WTC11 (cell line): ENCODE measurements at regions of chr12 and their contacts with region 1.

Region 1: DNA sequence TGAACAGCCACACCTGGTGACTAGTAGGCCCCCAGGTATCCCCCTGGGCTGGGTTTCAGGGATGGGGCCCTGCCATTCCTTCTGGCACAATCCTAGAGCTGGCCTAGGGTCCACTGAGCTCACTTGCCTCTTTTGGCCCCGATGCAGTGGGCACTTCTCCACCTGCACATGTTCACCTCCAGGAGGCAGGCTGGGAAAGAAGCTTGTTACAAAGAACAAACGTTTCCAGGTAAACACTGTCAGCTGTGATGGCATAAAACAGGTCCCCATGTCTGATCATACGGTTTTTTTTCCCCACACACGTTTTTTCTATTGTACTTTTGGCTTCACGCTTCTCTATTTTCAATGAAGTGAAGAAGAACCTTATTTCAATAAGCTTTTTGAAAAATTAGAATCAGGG is 15.8 kb upstream of the HVCN1 start:
- DNase-seq: peak; percentile 42
- ATAC-seq: peak; percentile 88
- H3K4me3 Mint-ChIP-seq: no peak overlapping the region
- H3K27ac Mint-ChIP-seq: no peak overlapping the region
- H3K4me1 Mint-ChIP-seq: 0 out of 2 replicates have a peak, but pooled peaks cover 2% of the 10 kb centered on the region
- H3K27me3 Mint-ChIP-seq: no peaks in the 10 kb centered on the region; the same call in 1 of the 2 replicates
- CTCF ChIP-seq: no peak

Region 2: GRCh38 chr12:110826592-110827200 is 121.9 kb after region 1 on chr12:
- CTCF ChIA-PET with region 1: interaction called, 23 read pairs
- POLR2A ChIA-PET with region 1: no interaction called
- DNase-seq: peak; percentile 95
- ATAC-seq: peak; percentile 98
- H3K4me3 Mint-ChIP-seq: peak overlapping the region; percentile 8; the same call in 1 of the 2 replicates
- H3K27ac Mint-ChIP-seq: no peak overlapping the region
- H3K4me1 Mint-ChIP-seq: 0 out of 2 replicates have a peak, but pooled peaks cover 4% of the 10 kb centered on the region
- H3K27me3 Mint-ChIP-seq: peaks cover 19% of the 10 kb centered on the region
- CTCF ChIP-seq: peak; percentile 90